GM12878 (cell line): ENCODE measurements at regions of chr4 and their contacts with region 1.

Region 1: GRCh38 chr4:67746797-67747495 is 7.2 kb downstream of the GNRHR start:
- DNase-seq: peak; percentile 13
- ATAC-seq: peak; percentile 56
- H3K4me3 ChIP-seq: no peak overlapping the region
- H3K27ac ChIP-seq: no peak overlapping the region
- H3K4me1 ChIP-seq: no peaks in the 10 kb centered on the region
- H3K27me3 ChIP-seq: no peaks in the 10 kb centered on the region
- CTCF ChIP-seq: peak in 2 of 3 experiments; percentile 51 to 52; a peak in 3 of 6 replicates
- EP300 ChIP-seq: no peak
- POLR2A ChIP-seq: no peak
- RAD21 ChIP-seq: peak; percentile 43; the same call in 1 of the 2 replicates

Region 2: DNA sequence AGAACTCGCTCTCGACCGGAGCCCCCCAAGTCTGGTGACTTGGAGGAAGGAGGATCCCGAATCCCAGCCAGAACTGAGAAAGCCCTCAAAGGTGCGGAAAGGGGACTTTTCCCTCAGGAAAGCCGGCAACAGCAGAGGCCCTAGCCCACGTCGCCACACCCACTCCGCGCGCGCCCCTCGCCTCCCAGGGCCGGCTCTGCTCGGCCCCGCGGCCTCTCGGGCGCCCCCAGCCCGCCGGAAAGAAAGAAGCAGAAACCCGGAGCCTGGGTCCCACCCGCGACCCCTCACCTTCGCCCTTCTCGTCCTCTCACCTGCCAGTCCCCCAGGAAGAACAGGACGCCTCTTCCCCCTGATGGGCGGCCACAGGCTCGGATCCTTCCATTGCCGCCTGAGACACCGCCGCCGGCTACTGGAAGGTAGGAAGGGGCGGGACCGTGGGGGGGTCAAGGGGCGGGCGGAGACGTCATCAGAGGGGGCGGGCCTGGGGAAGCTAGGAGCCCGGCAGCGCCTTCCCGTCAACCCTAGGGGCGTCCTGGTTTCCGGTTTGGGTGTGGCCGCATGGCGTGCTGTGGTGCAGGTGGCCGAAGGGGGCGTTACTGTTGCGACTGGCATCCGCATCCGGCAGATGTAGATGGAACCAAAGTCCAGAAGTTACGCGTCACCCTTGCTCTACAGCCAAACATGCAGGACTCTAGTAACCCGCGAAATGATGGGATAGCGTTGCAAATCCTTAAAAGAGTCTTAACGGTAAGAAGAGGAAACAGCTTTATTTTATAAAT is 46.0 kb before region 1 on chr4 and contains the start of gene UBA6:
- CTCF ChIA-PET with region 1: interaction called, 10 read pairs
- POLR2A ChIA-PET with region 1: no interaction called
- RAD21 ChIA-PET with region 1: interaction called, 8 read pairs
- SMC1A ChIA-PET with region 1: interaction called, 22 read pairs
- in situ Hi-C with region 1: no loop called
- intact Hi-C with region 1: no loop called
- DNase-seq: peak; percentile 89
- ATAC-seq: peak; percentile 95
- H3K4me3 ChIP-seq: peak within 1 kb of the TSS; percentile 77
- H3K27ac ChIP-seq: peak within 1 kb of the TSS; percentile 95
- H3K4me1 ChIP-seq: no peaks in the 10 kb centered on the region
- H3K27me3 ChIP-seq: no peaks in the 10 kb centered on the region
- CTCF ChIP-seq: peak; percentile 27 to 55 (median 31); a peak in 5 of 6 replicates
- EP300 ChIP-seq: peak; percentile 50 to 73; a peak in 3 of 4 replicates
- POLR2A ChIP-seq: peak; percentile 93
- RAD21 ChIP-seq: peak; percentile 23; the same call in 1 of the 2 replicates
- polyA plus RNA-seq, gene UBA6: 7.9 to 15.3 TPM

Region 3: DNA sequence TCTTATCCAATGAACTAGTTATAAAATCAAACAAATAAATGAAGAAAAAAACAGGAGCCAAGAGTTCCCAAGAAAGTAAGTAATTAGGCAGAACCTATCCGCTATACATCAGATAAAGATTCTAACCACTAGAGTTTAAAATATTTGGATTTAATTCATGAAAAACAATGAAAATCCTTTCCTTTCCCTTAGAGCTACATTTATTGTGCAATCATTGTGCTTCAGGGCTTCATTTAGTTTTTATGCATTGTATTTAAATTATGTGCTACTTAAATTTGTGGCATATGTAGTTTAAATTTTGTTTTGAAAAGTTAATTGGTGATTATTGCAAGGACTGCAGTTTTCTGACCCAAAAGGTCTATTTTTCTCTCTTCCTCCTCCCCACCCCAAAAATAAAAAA is 10.7 kb before region 1 on chr4:
- CTCF ChIA-PET with region 1: interaction called, 40 read pairs
- POLR2A ChIA-PET with region 1: no interaction called
- RAD21 ChIA-PET with region 1: interaction called, 3 read pairs
- SMC1A ChIA-PET with region 1: no interaction called
- in situ Hi-C with region 1: no loop called
- intact Hi-C with region 1: no loop called
- DNase-seq: no peak
- ATAC-seq: no peak
- H3K4me3 ChIP-seq: no peak overlapping the region
- H3K27ac ChIP-seq: no peak overlapping the region
- H3K4me1 ChIP-seq: no peaks in the 10 kb centered on the region
- H3K27me3 ChIP-seq: no peaks in the 10 kb centered on the region
- CTCF ChIP-seq: no peak
- EP300 ChIP-seq: no peak
- POLR2A ChIP-seq: no peak
- RAD21 ChIP-seq: no peak

Region 4: DNA sequence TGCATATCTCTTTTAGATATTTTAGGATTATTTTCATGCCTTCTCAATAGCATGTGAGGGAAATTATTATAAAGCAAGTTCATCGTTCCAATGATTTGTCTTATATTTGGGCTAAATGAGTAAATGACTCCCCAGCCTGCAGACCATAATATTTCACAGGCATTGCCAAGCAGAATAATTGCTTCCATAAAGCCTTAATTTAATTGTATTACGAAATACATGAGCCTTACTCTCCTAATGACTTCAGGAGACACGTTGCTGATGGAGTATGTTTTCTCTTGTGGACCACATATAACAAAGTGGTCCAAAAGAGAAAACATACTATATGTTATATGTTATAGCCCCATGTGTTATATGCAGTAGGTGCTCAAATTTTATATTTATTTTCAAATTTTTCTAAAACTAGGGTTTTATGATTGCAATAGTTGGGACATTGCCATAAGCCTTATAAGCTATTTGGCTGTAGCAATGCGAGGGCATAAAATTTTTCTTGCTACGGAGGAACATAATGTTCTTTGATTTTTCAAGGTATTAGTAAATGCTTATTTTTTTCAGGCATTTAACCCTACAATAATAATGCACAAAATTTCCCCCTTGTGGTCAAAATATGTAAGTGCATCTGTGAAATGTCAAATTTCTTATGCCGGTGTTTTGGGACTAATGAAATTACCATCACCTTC is 163.1 kb after region 1 on chr4:
- CTCF ChIA-PET with region 1: interaction called, 29 read pairs
- POLR2A ChIA-PET with region 1: interaction called, 5 read pairs
- RAD21 ChIA-PET with region 1: interaction called, 3 read pairs
- SMC1A ChIA-PET with region 1: interaction called, 11 read pairs
- in situ Hi-C with region 1: no loop called
- intact Hi-C with region 1: loop called (anchors 10 kb)
- DNase-seq: no peak
- ATAC-seq: peak; percentile 40; the same call in 1 of the 3 replicates
- H3K4me3 ChIP-seq: no peak overlapping the region
- H3K27ac ChIP-seq: no peak overlapping the region
- H3K4me1 ChIP-seq: no peaks in the 10 kb centered on the region
- H3K27me3 ChIP-seq: no peaks in the 10 kb centered on the region
- CTCF ChIP-seq: peak; percentile 44 to 54 (median 51); a peak in 5 of 6 replicates
- EP300 ChIP-seq: no peak
- POLR2A ChIP-seq: no peak
- RAD21 ChIP-seq: peak; percentile 57